Calu3 (cell line): ENCODE measurements at regions of chr20 and their contacts with region 1.

Region 1: DNA sequence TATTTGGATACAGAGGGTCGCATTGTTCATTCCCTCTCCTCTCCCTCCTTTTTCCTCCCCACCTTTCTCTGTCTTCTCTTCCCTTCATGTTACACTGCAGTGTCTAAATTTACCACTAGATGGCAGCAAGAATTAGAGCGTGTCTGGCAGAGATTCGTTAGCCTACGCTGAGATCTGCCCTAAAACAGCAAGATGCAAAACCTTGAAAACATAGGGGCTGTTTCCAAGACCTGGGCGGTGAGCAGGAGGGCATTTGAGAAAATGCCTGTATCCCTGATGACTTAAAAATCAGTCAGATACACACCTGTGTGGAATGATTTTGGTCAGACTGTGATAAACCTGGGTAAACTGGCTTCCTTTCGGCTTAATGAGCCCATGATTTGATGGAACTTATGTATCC is 101.5 kb upstream of the ISM1 start:
- DNase-seq: peak; percentile 41
- H3K4me3 Mint-ChIP-seq: no peak overlapping the region
- H3K27ac Mint-ChIP-seq: no peak overlapping the region
- H3K4me1 Mint-ChIP-seq: no peaks in the 10 kb centered on the region
- H3K27me3 Mint-ChIP-seq: no peaks in the 10 kb centered on the region
- CTCF ChIP-seq: peak; percentile 57

Region 2: DNA sequence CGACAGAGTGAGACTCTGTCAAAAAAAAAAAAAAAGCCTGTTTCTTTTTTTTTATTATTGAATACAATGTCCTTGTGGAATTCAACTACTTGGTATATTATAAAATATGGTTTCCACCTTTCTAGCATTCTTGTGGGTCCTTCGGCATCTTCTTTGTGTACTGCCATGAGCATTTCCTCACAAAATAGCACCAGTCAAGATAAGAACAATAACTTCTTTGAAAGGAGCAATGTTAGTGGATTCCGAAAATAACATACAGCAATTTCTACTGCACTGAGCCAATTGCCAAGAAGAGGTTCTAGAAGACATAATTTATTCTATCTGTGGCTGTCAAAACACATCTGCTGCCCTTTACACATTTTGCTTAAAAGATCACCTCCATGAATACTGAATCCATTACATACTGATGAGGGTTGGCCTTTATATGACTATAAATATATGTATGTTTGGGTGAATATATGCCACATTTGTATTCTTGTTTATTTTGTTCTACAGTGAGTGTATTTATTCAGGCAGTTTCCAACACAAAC is 129.9 kb before region 1 on chr20:
- CTCF ChIA-PET with region 1: no interaction called
- intact Hi-C with region 1: no loop called
- DNase-seq: no peak
- H3K4me3 Mint-ChIP-seq: no peak overlapping the region
- H3K27ac Mint-ChIP-seq: no peak overlapping the region
- H3K4me1 Mint-ChIP-seq: peaks cover 8% of the 10 kb centered on the region
- H3K27me3 Mint-ChIP-seq: no peaks in the 10 kb centered on the region
- CTCF ChIP-seq: no peak

Region 3: DNA sequence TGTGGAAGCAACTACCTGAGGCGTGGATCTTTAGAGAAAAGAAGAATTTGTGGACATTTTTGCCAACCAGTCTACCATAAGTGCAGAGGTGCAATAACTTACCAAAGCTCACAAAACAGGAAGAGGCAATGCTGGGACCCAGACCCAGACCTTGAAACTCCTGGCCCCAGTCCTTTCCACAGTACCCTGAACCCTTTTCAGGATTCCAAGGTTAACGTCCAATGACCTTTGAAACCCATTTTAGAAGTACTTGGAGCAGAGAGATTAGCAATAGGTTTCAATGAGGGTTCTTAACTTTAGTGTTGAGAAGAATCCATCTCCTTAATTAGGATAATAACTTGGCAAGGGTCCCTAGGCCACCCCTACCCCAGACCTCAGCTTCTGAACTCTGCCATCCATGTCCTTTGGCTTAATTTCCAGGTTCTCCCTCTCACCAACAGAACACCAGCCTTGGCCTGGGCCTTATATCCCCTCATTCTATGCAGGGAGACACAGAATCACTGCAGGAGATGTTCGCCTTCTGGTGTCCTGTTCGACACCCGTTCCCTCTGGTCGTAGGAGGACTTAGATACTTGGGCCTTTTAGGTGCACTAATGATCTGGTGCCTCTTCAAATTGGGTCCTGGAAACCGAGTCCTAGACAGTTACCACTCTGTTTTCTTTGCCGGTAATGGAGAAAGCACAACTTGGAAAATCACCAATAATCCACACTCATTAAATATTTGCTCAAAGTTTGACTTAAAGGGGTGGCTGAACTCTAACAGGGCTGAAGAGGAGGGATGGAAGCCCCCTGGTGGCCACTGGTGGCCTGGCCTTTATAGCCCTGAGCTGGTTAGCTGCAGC is 142.1 kb after region 1 on chr20:
- CTCF ChIA-PET with region 1: interaction called, 5 read pairs
- intact Hi-C with region 1: loop called (anchors 1 kb)
- DNase-seq: peak; percentile 68
- H3K4me3 Mint-ChIP-seq: no peak overlapping the region
- H3K27ac Mint-ChIP-seq: no peak overlapping the region
- H3K4me1 Mint-ChIP-seq: no peaks in the 10 kb centered on the region
- H3K27me3 Mint-ChIP-seq: no peaks in the 10 kb centered on the region
- CTCF ChIP-seq: peak; percentile 55

Region 4: GRCh38 chr20:13302647-13303450 is 183.3 kb after region 1 on chr20:
- CTCF ChIA-PET with region 1: no interaction called
- intact Hi-C with region 1: loop called (anchors 1 kb)
- DNase-seq: peak; percentile 46
- H3K4me3 Mint-ChIP-seq: no peak overlapping the region
- H3K27ac Mint-ChIP-seq: no peak overlapping the region
- H3K4me1 Mint-ChIP-seq: no peaks in the 10 kb centered on the region
- H3K27me3 Mint-ChIP-seq: no peaks in the 10 kb centered on the region
- CTCF ChIP-seq: no peak

Region 5: GRCh38 chr20:13546497-13547131 is 427.0 kb after region 1 on chr20:
- CTCF ChIA-PET with region 1: no interaction called
- intact Hi-C with region 1: loop called (anchors 1 kb)
- DNase-seq: peak; percentile 75
- H3K4me3 Mint-ChIP-seq: no peak overlapping the region
- H3K27ac Mint-ChIP-seq: no peak overlapping the region
- H3K4me1 Mint-ChIP-seq: no peaks in the 10 kb centered on the region
- H3K27me3 Mint-ChIP-seq: no peaks in the 10 kb centered on the region
- CTCF ChIP-seq: peak; percentile 60

Region 6: GRCh38 chr20:13765299-13765698 is 645.7 kb after region 1 on chr20:
- CTCF ChIA-PET with region 1: no interaction called
- intact Hi-C with region 1: loop called (anchors 10 kb)
- DNase-seq: no peak
- H3K4me3 Mint-ChIP-seq: no peak overlapping the region
- H3K27ac Mint-ChIP-seq: no peak overlapping the region
- H3K4me1 Mint-ChIP-seq: no peaks in the 10 kb centered on the region
- H3K27me3 Mint-ChIP-seq: no peaks in the 10 kb centered on the region
- CTCF ChIP-seq: no peak